CD4-positive, alpha-beta memory T cell (primary cell): ENCODE measurements at regions of chr1 and their contacts with region 1.

Region 1: GRCh38 chr1:40774266-40774998 is 9.2 kb upstream of the KCNQ4 start:
- DNase-seq: peak; percentile 42 to 53 (median 51)
- H3K4me3 ChIP-seq: no peak overlapping the region
- H3K4me3 Mint-ChIP-seq: no peak overlapping the region
- H3K27ac ChIP-seq: no peak overlapping the region
- H3K27ac Mint-ChIP-seq: peak overlapping the region in 1 of 7 donors; percentile 24
- H3K4me1 ChIP-seq: no peaks in the 10 kb centered on the region
- H3K4me1 Mint-ChIP-seq: peaks cover 0 to 2% (median 0%) of the 10 kb centered on the region in 4 donors
- H3K27me3 ChIP-seq: no peaks in the 10 kb centered on the region
- H3K27me3 Mint-ChIP-seq: no peaks in the 10 kb centered on the region

Region 2: DNA sequence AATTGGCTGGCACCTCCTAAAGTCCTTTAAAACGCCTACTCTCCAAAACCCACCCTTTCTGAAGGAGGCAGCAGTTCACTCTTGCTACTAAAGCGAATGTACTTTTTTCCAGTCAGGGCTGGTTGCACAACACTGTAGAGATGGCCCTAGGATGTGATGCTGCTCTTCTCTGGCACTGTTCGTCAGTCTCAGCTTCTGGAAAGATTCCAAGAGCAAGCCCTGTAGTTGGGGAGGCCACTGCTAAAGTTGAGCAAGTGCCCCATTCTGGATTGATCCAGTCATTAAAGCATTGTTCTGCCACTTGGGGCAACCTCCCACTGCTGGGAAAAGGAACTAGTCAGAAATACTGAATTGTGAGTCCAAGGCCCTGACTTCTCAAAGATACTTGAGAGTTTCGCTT is 19.4 kb before region 1 on chr1:
- CTCF ChIA-PET with region 1: interaction called, 47 read pairs
- POLR2A ChIA-PET with region 1: no interaction called
- intact Hi-C with region 1: no loop called
- DNase-seq: no peak
- H3K4me3 ChIP-seq: no peak overlapping the region
- H3K4me3 Mint-ChIP-seq: no peak overlapping the region
- H3K27ac ChIP-seq: no peak overlapping the region
- H3K27ac Mint-ChIP-seq: no peak overlapping the region
- H3K4me1 ChIP-seq: no peaks in the 10 kb centered on the region
- H3K4me1 Mint-ChIP-seq: peaks cover 4 to 16% (median 10%) of the 10 kb centered on the region in 4 donors
- H3K27me3 ChIP-seq: no peaks in the 10 kb centered on the region
- H3K27me3 Mint-ChIP-seq: no peaks in the 10 kb centered on the region

Region 3: DNA sequence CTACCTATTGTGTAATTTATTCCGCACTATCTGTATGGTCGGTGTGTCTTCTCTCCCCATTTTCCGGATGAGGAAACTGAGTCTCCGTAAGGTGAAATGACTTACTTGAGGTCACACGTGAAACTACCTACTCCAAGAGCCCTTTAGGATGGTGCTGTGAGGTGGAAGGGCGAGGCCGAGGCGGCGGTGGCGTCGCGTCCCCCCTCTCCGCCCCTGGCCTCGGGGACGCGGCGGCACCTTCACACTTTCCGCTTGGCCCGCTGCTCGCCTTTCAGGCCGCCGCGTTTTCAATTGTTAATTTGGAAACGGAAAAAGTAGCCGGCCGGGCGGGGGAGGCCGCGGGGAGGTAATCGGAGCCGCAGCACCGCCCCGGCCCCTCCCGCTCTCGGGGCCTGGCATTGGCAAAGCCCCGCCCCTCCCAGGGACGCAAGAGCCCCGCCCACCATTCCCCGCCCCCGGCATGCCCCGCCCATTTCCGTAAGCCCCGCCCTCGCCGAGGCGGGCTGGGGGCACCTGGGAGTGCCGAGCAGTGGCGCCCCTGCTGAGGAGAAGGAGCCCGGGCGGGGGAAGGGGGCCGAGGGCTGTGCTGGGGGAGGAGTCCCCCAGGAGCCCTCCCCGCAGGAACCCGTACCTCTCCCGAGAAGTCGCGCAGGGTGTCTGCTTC is 27.8 kb after region 1 on chr1:
- CTCF ChIA-PET with region 1: interaction called, 32 read pairs
- POLR2A ChIA-PET with region 1: interaction called, 3 read pairs
- intact Hi-C with region 1: no loop called
- DNase-seq: peak; percentile 85 to 88 (median 86)
- H3K4me3 ChIP-seq: peak overlapping the region in 1 of 2 donors; percentile 62
- H3K4me3 Mint-ChIP-seq: peak overlapping the region; percentile 66 to 87 (median 78)
- H3K27ac ChIP-seq: peak overlapping the region; percentile 63
- H3K27ac Mint-ChIP-seq: peak overlapping the region; percentile 22 to 90 (median 86)
- H3K4me1 ChIP-seq: peaks cover 25% of the 10 kb centered on the region
- H3K4me1 Mint-ChIP-seq: peaks cover 16 to 37% (median 28%) of the 10 kb centered on the region in 4 donors
- H3K27me3 ChIP-seq: no peaks in the 10 kb centered on the region
- H3K27me3 Mint-ChIP-seq: no peaks in the 10 kb centered on the region

Region 4: DNA sequence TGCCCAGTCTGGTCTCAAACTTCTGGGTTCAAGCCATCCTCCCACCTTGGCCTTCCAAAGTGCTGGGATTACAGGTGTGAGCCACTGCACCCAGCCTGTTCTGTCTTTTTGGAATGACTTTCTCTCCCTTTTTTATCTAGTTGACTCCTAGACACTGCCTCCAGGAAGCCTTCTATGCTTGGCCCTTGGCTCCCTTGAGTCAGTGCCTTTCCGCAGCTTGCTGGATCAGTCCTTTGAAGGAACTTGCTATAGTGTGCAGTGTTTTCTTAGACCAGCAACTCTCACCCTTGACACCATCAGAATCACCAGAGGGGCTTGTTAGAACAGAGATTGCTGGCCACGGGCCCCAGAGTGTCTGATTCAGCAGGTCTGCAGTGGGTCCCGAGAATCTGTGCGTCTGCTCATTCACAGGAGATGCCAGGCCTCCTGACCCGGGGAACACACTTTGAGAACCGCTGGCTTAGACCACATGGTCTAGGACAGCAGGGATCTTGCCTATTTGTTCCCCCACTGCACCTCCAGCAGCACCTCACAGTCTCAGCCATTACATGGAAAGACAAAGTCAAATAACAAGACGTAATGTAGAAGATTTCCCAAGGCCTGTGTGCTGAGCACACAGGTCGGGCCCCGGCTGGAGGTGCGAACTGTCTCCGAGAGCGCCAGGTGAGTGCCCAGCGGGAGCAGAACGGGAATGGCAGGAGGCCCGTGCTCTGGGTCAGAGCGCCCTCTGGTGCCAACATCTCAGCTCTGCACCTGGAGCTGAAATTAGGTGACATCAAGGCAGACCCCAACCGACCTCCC is 177.7 kb after region 1 on chr1:
- CTCF ChIA-PET with region 1: interaction called, 131 read pairs
- POLR2A ChIA-PET with region 1: no interaction called
- intact Hi-C with region 1: loop called (anchors 1 kb)
- DNase-seq: peak; percentile 43 to 52 (median 47)
- H3K4me3 ChIP-seq: no peak overlapping the region
- H3K4me3 Mint-ChIP-seq: peak overlapping the region in 1 of 8 donors; percentile 39
- H3K27ac ChIP-seq: no peak overlapping the region
- H3K27ac Mint-ChIP-seq: no peak overlapping the region
- H3K4me1 ChIP-seq: no peaks in the 10 kb centered on the region
- H3K4me1 Mint-ChIP-seq: peaks cover 0 to 11% (median 4%) of the 10 kb centered on the region in 4 donors
- H3K27me3 ChIP-seq: peaks cover 5% of the 10 kb centered on the region
- H3K27me3 Mint-ChIP-seq: peaks cover 5 to 18% of the 10 kb centered on the region in 2 donors